Heart left ventricle (tissue), 16 donors: ENCODE measurements at regions of chr17 and their contacts with region 1.

Region 1: DNA sequence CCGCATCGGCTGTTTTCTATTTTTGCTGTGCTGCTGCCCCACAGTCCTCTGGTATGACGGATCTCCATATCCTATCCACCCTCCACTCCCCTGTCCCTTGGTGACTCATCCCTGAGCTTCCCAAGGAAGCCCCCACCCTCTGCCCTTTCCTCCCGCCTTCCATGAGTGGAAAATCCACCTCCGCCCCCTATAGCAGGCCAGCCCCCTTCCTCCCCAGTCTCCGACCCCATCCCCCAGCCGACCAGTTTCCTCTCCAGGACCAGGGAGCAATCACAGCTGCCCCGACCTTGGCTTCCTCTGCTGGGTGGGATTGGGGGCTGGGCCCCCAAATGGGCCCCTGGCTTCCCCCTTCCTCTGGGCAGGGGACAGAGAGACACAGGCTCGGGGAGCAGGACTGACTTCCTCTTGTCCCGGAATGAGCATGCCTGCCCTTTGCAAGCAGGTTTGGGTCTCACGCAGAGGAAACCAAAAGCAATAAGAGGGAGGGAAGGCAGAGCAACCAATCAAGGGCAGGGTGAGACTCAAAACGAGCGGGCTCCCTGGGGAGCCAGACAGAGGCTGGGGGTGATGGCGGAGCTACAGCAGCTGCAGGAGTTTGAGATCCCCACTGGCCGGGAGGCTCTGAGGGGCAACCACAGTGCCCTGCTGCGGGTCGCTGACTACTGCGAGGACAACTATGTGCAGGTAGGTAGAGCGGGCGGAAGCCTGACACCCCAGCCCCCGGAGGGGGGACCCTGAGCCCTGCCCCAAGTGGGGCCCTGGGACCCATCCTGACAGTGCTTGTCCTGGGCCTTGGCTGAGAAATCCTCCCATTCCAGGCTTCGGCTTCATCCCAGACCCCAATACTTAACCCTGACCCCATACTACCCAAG is at the starts of genes ABI3 and GNGT2:
- DNase-seq: peak; percentile 46 to 75 (median 64)
- ATAC-seq: peak; percentile 83 to 93 (median 88)
- H3K4me3 ChIP-seq: peak within 1 kb of the TSS; percentile 32 to 70 (median 60)
- H3K27ac ChIP-seq: peak within 1 kb of the TSS; percentile 65 to 91 (median 84)
- H3K4me1 ChIP-seq: peaks cover 0 to 69% (median 24%) of the 10 kb centered on the region in 12 donors
- H3K27me3 ChIP-seq: peaks cover 0 to 7% (median 0%) of the 10 kb centered on the region in 9 donors
- CTCF ChIP-seq: no peak
- POLR2A ChIP-seq: peak in 1 of 2 donors; percentile 41
- total RNA-seq, gene ABI3: 3.3 to 16.1 (median 6.4) TPM
- total RNA-seq, gene GNGT2: 0.76 to 4.9 (median 1.2) TPM

Region 2: DNA sequence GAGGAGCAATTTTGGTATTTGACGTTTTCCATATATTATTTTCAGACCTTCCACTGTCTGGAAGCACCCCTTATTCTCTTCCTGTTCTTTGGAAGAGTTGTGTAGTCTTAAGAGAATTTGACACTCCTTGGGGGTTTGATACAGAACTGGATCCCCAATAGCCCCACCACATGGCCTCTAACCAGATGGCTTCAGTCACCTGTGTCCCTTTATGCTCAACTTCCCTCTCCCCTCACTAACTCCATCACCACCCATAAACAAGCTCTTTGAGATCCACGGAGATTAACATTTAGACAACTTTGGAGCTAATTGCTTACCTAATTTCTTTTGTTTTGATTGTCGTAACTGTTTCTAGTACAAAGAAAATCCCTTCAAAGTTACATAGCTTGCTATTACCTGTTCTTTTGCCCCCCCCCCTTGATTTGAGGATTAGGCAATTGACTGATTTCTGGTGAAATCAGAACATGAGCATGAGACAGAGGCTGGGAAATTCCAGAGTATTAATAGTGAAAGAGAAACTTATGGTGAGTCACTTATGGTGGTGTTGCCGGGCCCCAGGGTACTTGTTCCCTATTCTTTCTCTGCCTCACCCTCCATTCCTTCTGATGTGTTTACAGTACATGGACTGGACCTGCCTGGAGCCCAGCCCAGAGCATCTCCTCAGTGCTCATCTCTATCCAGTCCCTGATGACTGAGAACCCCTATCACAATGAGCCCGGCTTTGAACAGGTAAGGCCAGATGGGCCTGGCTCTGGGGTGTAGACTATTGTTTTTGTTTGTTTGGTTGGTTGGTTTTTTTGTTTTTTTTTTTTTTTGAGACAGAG is 294.7 kb before region 1 on chr17:
- intact Hi-C with region 1: no loop called
- DNase-seq: no peak
- ATAC-seq: peak; percentile 32 to 57 (median 43)
- H3K4me3 ChIP-seq: peak overlapping the region in 1 of 12 donors; percentile 10
- H3K27ac ChIP-seq: peak overlapping the region in 1 of 12 donors; percentile 84
- H3K4me1 ChIP-seq: peaks cover 0 to 56% (median 6%) of the 10 kb centered on the region in 12 donors
- H3K27me3 ChIP-seq: no peaks in the 10 kb centered on the region
- CTCF ChIP-seq: no peak
- POLR2A ChIP-seq: no peak

Region 3: GRCh38 chr17:49260011-49260921 is 49.9 kb after region 1 on chr17:
- intact Hi-C with region 1: loop called in 1 of 10 experiments (anchors 5 kb)
- DNase-seq: peak; percentile 77 to 90 (median 85)
- ATAC-seq: peak; percentile 66 to 88 (median 83)
- H3K4me3 ChIP-seq: peak overlapping the region; percentile 18 to 70 (median 57)
- H3K27ac ChIP-seq: peak overlapping the region; percentile 75 to 92 (median 86)
- H3K4me1 ChIP-seq: peaks cover 0 to 20% (median 9%) of the 10 kb centered on the region in 12 donors
- H3K27me3 ChIP-seq: no peaks in the 10 kb centered on the region
- CTCF ChIP-seq: no peak
- POLR2A ChIP-seq: no peak

Region 4: GRCh38 chr17:49968380-49969133 is 758.2 kb after region 1 on chr17:
- intact Hi-C with region 1: no loop called
- DNase-seq: peak; percentile 45 to 84 (median 61)
- ATAC-seq: peak; percentile 49 to 80 (median 72)
- H3K4me3 ChIP-seq: peak overlapping the region; percentile 26 to 63 (median 44)
- H3K27ac ChIP-seq: no peak overlapping the region
- H3K4me1 ChIP-seq: peaks cover 2 to 56% (median 32%) of the 10 kb centered on the region in 12 donors
- H3K27me3 ChIP-seq: peaks cover 71 to 100% (median 95%) of the 10 kb centered on the region in 9 donors
- CTCF ChIP-seq: no peak
- POLR2A ChIP-seq: no peak